T-cell (primary cell): ENCODE measurements at regions of chr12 and their contacts with region 1.

Region 1: GRCh38 chr12:76432733-76433132 is 84.5 kb upstream of the BBS10 start:
- DNase-seq: no peak
- ATAC-seq: no peak
- H3K4me3 ChIP-seq: no peak overlapping the region
- H3K4me3 Mint-ChIP-seq: no peak overlapping the region
- H3K27ac ChIP-seq: no peak overlapping the region
- H3K27ac Mint-ChIP-seq: no peak overlapping the region
- H3K4me1 ChIP-seq: peaks cover 0 to 3% of the 10 kb centered on the region in 2 experiments
- H3K4me1 Mint-ChIP-seq: peaks cover 24 to 38% (median 33%) of the 10 kb centered on the region in 3 donors
- H3K27me3 ChIP-seq: no peaks in the 10 kb centered on the region
- H3K27me3 Mint-ChIP-seq: no peaks in the 10 kb centered on the region

Region 2: GRCh38 chr12:76586764-76587395 is 154.1 kb after region 1 on chr12:
- CTCF ChIA-PET with region 1: no interaction called
- POLR2A ChIA-PET with region 1: interaction called in 1 of 2 experiments, 14 read pairs
- DNase-seq: peak in 30 of 35 experiments; percentile 2 to 73 (median 32)
- ATAC-seq: peak; percentile 58 to 70 (median 64)
- H3K4me3 ChIP-seq: no peak overlapping the region
- H3K4me3 Mint-ChIP-seq: no peak overlapping the region
- H3K27ac ChIP-seq: no peak overlapping the region
- H3K27ac Mint-ChIP-seq: peak overlapping the region in 1 of 2 donors; percentile 22
- H3K4me1 ChIP-seq: no peaks in the 10 kb centered on the region
- H3K4me1 Mint-ChIP-seq: peaks cover 0 to 1% (median 0%) of the 10 kb centered on the region in 3 donors
- H3K27me3 ChIP-seq: no peaks in the 10 kb centered on the region
- H3K27me3 Mint-ChIP-seq: no peaks in the 10 kb centered on the region

Region 3: GRCh38 chr12:78343657-78344056 is 1910.9 kb after region 1 on chr12:
- CTCF ChIA-PET with region 1: no interaction called
- POLR2A ChIA-PET with region 1: no interaction called
- DNase-seq: no peak
- ATAC-seq: no peak
- H3K4me3 ChIP-seq: no peak overlapping the region
- H3K4me3 Mint-ChIP-seq: no peak overlapping the region
- H3K27ac ChIP-seq: no peak overlapping the region
- H3K27ac Mint-ChIP-seq: no peak overlapping the region
- H3K4me1 ChIP-seq: no peaks in the 10 kb centered on the region
- H3K4me1 Mint-ChIP-seq: no peaks in the 10 kb centered on the region
- H3K27me3 ChIP-seq: no peaks in the 10 kb centered on the region
- H3K27me3 Mint-ChIP-seq: no peaks in the 10 kb centered on the region